Posterior vena cava (tissue), 2 donors: ENCODE measurements at regions of chr7 and their contacts with region 1.

Region 1: GRCh38 chr7:79820387-79820786 is 314.2 kb upstream of the GNAI1 start:
- DNase-seq: peak; percentile 79

Region 2: GRCh38 chr7:79855172-79855571 is 34.8 kb after region 1 on chr7:
- intact Hi-C with region 1: loop called in 1 of 2 experiments (anchors 2 kb)
- DNase-seq: no peak